ENCODE measurements at regions of chr20 and their contacts with region 1.

Region 1: DNA sequence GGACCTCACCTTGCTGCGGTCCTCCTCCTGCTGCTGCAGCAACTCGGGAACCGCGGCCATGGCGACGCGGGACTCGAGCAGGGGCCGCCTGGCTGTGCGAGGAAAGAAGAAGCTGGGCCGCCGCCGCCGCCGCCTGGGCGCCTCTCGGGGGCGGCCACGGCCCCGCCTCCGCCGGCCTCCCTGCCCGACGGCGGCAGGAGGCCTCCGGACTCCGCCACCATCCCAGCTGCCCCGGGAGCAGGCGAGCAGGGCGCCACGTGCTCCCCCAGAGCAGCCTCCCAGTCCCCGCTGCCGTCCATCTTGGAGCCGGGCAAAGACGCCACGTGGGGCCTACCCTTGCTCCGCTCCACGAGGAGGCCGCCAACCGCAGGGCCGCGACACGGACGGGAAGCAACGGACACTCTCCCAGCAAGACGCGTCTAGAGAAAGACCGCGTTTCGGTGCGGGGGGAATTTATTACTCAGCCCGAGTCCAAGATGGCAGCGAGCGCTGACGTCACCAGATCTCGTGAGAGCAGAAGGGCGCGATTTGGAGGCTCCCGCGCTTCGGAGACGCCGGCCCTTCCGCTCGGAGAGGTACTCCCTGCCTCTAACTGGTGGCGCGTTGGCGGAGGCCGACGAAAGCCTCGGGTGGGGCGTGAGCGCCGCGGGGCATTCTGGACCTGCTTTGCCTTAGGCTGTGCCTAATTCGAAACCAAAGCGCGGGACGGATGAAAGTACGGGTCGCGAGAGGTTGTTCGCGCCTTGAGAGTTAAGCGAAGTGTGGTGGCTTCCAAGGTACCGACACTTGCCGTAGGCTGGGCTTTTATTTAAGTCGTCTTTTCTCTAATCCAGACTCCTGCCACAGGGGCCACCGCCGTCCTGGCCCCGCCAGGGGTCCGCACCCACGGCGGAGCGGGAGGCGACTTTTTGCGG is at the starts of genes MGME1 and SNX5:
- DNase-seq: peak; percentile 97 to 99 (median 98)
- ATAC-seq: peak; percentile 89
- H3K4me3 ChIP-seq: peak within 1 kb of the TSS; percentile 91 to 99
- H3K4me3 Mint-ChIP-seq: peak within 1 kb of the TSS; percentile 97
- H3K27ac ChIP-seq: peak within 1 kb of the TSS; percentile 91 to 99
- H3K27ac Mint-ChIP-seq: peak within 1 kb of the TSS; percentile 98
- H3K4me1 ChIP-seq: peaks cover 63% of the 10 kb centered on the region
- H3K4me1 Mint-ChIP-seq: peaks cover 78% of the 10 kb centered on the region
- H3K27me3 ChIP-seq: no peaks in the 10 kb centered on the region
- H3K27me3 Mint-ChIP-seq: no peaks in the 10 kb centered on the region
- CTCF ChIP-seq: no peak
- total RNA-seq, gene MGME1: 4.5 to 4.7 TPM
- total RNA-seq, gene SNX5: 47.3 to 52.0 TPM

Region 2: DNA sequence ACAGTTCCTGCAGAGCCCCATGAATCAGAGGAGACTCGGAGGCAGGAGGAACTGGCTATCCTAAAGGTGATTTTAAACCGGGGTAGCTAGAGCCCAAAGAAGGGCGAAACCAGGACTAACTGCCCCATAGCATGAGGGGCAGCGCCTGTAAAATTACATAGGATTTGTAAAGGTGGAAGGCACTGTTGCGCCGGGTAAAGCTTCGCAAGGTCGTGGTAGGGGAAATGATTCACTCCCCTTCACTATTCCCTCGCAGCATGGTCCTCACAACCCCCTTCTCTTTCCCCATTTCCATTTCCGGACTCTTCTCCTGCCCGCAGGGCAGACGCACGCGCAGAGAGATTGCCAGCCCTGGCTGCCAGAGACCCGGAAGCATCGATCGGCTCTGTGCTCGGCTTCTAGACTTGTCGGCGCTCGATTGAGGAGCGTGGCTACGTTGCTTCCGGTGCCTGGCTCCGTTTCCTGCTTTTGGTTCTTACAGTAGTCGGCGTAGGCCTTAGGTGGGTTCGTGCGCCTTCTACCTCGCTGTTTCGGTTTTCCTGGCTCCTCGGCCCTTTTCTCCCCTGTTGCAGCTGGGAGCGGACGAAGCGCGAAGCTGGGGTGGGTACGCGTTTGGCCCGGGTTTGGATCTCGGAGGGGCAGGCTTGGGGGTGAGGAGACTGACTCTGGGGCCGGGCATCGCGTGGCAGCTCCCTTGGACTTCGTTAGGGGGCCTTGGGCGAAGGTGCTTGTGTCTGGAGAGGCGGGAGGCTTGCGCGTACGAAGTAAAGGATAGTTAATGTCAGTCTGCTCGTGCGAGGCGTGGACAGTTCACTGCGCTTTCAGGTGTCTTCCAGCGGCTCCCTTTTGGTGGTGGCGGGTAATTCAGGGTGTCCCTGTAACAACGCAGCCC is 1238.8 kb before region 1 on chr20 and contains the start of gene SNRPB2:
- CTCF ChIA-PET with region 1: no interaction called
- POLR2A ChIA-PET with region 1: no interaction called
- intact Hi-C with region 1: loop called in 1 of 2 experiments (anchors 10 kb)
- DNase-seq: peak; percentile 81 to 96 (median 91)
- ATAC-seq: peak; percentile 95
- H3K4me3 ChIP-seq: peak within 1 kb of the TSS; percentile 84 to 97
- H3K4me3 Mint-ChIP-seq: peak within 1 kb of the TSS; percentile 100
- H3K27ac ChIP-seq: peak within 1 kb of the TSS; percentile 93 to 94
- H3K27ac Mint-ChIP-seq: peak within 1 kb of the TSS; percentile 100
- H3K4me1 ChIP-seq: peaks cover 36% of the 10 kb centered on the region
- H3K4me1 Mint-ChIP-seq: peaks cover 52% of the 10 kb centered on the region
- H3K27me3 ChIP-seq: peaks cover 0 to 12% of the 10 kb centered on the region in 2 experiments
- H3K27me3 Mint-ChIP-seq: peaks cover 15% of the 10 kb centered on the region
- CTCF ChIP-seq: no peak
- total RNA-seq, gene SNRPB2: 49.0 to 50.4 TPM

Region 3: DNA sequence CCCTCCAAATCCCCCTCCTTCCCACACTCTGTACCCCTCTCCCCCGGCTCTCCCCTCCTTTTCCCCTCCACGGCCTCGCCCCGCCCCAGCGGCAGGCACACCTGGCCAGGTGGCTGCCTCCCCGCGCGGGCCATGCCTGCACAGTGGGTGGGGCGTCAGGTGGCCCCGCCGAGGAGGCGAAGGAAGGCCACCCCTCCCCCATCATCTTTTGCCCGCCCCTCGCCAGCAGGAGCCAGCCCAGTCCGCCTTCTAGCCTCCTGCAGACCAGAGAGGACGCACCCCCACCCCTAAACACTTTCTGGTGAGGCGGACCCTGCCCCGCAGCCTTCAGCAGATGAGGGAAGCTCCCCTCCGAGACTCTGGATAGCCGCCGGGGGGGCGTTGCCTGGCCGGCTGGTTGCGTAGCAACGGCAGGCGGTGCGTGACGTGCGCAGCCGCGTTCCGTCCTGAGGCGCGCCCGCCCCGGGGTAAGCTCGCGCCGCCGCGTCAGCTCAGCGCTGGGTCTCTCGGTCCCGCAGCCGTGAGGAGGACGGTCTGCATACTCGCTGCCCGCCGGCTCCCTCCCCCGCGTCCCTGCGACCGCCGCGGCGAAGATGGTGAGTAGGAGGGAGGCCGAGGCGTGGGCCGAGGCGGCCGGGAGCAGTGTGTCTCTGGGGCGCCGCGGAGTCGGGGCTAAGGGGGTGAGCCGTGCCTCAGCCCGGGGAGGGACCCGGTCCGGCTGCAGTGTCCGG is 398.8 kb before region 1 on chr20 and contains the start of gene DSTN:
- CTCF ChIA-PET with region 1: no interaction called
- POLR2A ChIA-PET with region 1: interaction called, 3 read pairs
- intact Hi-C with region 1: loop called (anchors 1 to 5 kb)
- DNase-seq: peak; percentile 76 to 94 (median 86)
- ATAC-seq: peak; percentile 88
- H3K4me3 ChIP-seq: peak within 1 kb of the TSS; percentile 80 to 92
- H3K4me3 Mint-ChIP-seq: peak within 1 kb of the TSS; percentile 85
- H3K27ac ChIP-seq: peak within 1 kb of the TSS; percentile 73 to 81
- H3K27ac Mint-ChIP-seq: peak within 1 kb of the TSS; percentile 91
- H3K4me1 ChIP-seq: peaks cover 24% of the 10 kb centered on the region
- H3K4me1 Mint-ChIP-seq: peaks cover 28% of the 10 kb centered on the region
- H3K27me3 ChIP-seq: no peaks in the 10 kb centered on the region
- H3K27me3 Mint-ChIP-seq: no peaks in the 10 kb centered on the region
- CTCF ChIP-seq: no peak
- total RNA-seq, gene DSTN: 40.5 to 42.9 TPM

Region 4: DNA sequence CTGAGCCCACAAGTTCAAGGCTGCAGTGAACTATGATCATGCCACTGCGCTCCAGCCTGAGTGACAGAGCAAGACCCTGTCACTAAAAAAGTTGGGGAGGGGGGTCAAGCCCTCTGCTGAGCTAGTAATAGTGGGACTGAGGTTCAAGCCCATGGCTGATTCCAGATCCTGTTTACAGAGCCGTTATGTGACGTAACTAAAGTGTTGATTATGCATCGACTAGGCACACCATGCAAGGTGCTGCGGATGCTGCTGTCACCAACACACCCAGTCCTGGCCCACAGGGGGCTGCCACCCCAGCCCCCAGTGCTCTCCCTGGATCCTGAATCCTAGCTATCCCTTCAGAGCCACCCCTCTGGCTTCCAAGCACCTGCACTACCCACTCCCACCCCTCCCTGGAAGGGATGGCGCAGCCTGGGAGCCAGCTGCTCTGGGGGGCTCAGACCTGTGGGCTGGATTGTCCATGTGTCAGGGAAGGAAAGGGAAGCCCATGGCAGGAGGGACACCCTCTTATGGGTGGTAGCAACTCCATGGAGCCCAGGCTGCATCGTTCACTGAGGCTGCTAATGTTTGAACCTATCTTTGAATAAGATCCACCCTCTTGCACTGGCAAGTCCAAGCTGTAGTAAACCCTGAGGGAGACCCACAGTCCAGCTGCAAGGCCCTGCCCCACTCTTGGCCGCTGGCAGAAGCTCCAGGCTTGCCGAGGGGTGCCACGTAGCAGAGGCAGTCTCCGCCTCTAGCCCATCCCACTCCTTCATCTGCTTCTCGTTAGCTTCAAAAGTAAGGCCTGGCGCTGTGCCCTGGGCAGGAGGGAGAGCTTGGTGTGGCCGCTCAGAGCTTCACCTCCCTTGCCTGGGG is 95.0 kb before region 1 on chr20:
- CTCF ChIA-PET with region 1: no interaction called
- POLR2A ChIA-PET with region 1: no interaction called
- intact Hi-C with region 1: no loop called
- DNase-seq: no peak
- ATAC-seq: no peak
- H3K4me3 ChIP-seq: no peak overlapping the region
- H3K4me3 Mint-ChIP-seq: no peak overlapping the region
- H3K27ac ChIP-seq: no peak overlapping the region
- H3K27ac Mint-ChIP-seq: no peak overlapping the region
- H3K4me1 ChIP-seq: no peaks in the 10 kb centered on the region
- H3K4me1 Mint-ChIP-seq: peaks cover 15% of the 10 kb centered on the region
- H3K27me3 ChIP-seq: no peaks in the 10 kb centered on the region
- H3K27me3 Mint-ChIP-seq: peaks cover 7% of the 10 kb centered on the region
- CTCF ChIP-seq: no peak

Region 5: GRCh38 chr20:17958373-17959256 is 10.0 kb before region 1 on chr20:
- CTCF ChIA-PET with region 1: interaction called, 11 read pairs
- POLR2A ChIA-PET with region 1: interaction called, 6 read pairs
- intact Hi-C with region 1: no loop called
- DNase-seq: peak in 1 of 9 experiments; percentile 3
- ATAC-seq: no peak
- H3K4me3 ChIP-seq: no peak overlapping the region
- H3K4me3 Mint-ChIP-seq: no peak overlapping the region
- H3K27ac ChIP-seq: peak overlapping the region in 1 of 2 experiments; percentile 34
- H3K27ac Mint-ChIP-seq: peak overlapping the region; percentile 83
- H3K4me1 ChIP-seq: peaks cover 23% of the 10 kb centered on the region
- H3K4me1 Mint-ChIP-seq: peaks cover 69% of the 10 kb centered on the region
- H3K27me3 ChIP-seq: no peaks in the 10 kb centered on the region
- H3K27me3 Mint-ChIP-seq: no peaks in the 10 kb centered on the region
- CTCF ChIP-seq: no peak

Region 6: GRCh38 chr20:18137412-18138265 is 169.0 kb after region 1 on chr20 and contains the starts of genes KAT14 and PET117:
- CTCF ChIA-PET with region 1: no interaction called
- POLR2A ChIA-PET with region 1: no interaction called
- intact Hi-C with region 1: loop called (anchors 1 kb)
- DNase-seq: peak; percentile 84 to 97 (median 90)
- ATAC-seq: peak; percentile 91
- H3K4me3 ChIP-seq: peak within 1 kb of the TSS; percentile 89 to 98
- H3K4me3 Mint-ChIP-seq: peak within 1 kb of the TSS; percentile 88
- H3K27ac ChIP-seq: peak within 1 kb of the TSS; percentile 84 to 91
- H3K27ac Mint-ChIP-seq: peak within 1 kb of the TSS; percentile 91
- H3K4me1 ChIP-seq: peaks cover 19% of the 10 kb centered on the region
- H3K4me1 Mint-ChIP-seq: peaks cover 36% of the 10 kb centered on the region
- H3K27me3 ChIP-seq: no peaks in the 10 kb centered on the region
- H3K27me3 Mint-ChIP-seq: no peaks in the 10 kb centered on the region
- CTCF ChIP-seq: no peak
- total RNA-seq, gene KAT14: 7.8 to 8.4 TPM
- total RNA-seq, gene PET117: 15.3 to 17.3 TPM

Region 7: DNA sequence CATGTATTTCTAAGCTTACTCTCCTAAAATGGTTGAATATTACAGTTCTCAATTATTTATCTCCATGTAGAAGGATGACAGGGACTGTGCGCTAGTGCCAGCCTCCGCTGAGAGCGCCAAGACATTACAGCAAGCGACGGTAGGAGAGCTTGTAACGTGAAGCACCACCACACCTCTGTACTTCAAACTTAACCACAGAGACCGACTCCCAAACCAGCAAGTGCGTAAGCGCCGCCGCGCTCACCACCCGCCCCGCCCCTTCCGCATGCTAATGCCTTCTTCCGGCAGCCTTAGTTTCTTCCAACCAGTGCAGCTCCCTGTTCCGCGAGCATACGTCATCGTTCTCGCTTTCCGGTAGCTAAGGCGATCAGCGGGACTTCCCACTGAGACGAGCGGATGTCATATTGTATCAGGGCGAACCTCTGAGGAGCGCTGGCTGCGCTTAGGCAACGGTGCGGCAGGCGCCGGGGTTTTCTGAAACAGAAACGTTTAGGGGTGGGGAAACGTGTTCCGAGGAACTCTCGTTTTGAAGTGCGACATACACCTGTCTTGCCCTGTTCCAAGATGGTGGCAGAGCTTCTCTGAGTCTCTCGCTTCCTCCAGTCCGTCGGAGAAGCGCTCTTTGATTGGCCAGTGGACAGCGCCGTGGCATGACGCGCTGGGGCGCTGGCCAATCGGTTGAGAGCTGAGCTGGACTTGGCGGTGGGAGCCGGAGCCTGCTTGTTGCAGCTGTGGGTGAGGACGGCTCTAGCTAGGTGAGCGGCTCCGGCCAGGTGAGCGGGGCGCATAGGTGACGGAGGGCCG is 538.8 kb after region 1 on chr20 and contains the start of gene SEC23B:
- CTCF ChIA-PET with region 1: no interaction called
- POLR2A ChIA-PET with region 1: no interaction called
- intact Hi-C with region 1: loop called in 1 of 2 experiments (anchors 2 kb)
- DNase-seq: peak; percentile 96 to 100 (median 98)
- ATAC-seq: peak; percentile 82
- H3K4me3 ChIP-seq: peak within 1 kb of the TSS; percentile 63 to 87
- H3K4me3 Mint-ChIP-seq: peak within 1 kb of the TSS; percentile 100
- H3K27ac ChIP-seq: peak within 1 kb of the TSS; percentile 97 to 100
- H3K27ac Mint-ChIP-seq: peak within 1 kb of the TSS; percentile 100
- H3K4me1 ChIP-seq: peaks cover 17% of the 10 kb centered on the region
- H3K4me1 Mint-ChIP-seq: peaks cover 47% of the 10 kb centered on the region
- H3K27me3 ChIP-seq: no peaks in the 10 kb centered on the region
- H3K27me3 Mint-ChIP-seq: no peaks in the 10 kb centered on the region
- CTCF ChIP-seq: no peak
- total RNA-seq, gene SEC23B: 31.5 to 31.8 TPM

Region 8: DNA sequence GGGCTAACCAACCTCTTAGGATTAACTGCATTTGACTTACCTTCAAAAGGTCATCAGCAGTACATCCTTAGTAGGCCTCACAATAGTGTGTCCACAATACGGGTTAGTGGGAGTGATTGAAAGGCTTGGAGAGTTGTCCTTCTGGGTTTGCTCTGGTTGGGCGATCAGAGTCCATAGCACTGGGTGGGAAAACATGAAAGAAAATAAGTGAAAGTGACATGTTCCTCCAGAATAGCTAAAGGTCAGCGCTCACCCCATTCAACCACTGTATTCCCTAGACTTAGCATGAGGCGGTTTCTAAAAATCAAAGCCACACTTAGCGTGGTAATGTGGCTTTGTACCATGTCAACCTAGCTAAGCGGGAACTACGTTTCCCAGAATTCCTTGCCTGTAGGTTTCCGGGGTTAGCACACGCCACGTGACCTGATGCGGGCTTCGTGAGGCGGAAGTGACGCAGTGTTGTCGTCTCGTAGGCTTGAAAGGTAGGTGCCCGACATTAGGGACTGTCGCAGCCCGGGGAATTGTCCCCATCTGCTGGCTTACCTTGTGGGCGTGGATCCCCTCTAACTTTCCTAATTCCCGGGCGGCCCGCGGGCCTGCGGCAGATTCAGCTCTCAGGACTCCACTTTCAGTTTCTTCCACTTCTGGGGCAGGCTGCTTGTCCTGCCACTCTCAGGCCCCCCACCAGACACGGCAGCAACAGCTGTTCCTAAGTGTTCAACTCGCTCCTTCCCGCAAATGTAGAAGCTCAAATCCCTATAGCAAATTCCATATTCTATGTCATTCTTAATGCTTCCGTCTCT is 825.2 kb after region 1 on chr20:
- CTCF ChIA-PET with region 1: no interaction called
- POLR2A ChIA-PET with region 1: no interaction called
- intact Hi-C with region 1: loop called (anchors 5 to 10 kb)
- DNase-seq: peak; percentile 78 to 98 (median 88)
- ATAC-seq: peak; percentile 93
- H3K4me3 ChIP-seq: peak overlapping the region; percentile 73 to 79
- H3K4me3 Mint-ChIP-seq: peak overlapping the region; percentile 96
- H3K27ac ChIP-seq: peak overlapping the region; percentile 94 to 95
- H3K27ac Mint-ChIP-seq: peak overlapping the region; percentile 100
- H3K4me1 ChIP-seq: peaks cover 12% of the 10 kb centered on the region
- H3K4me1 Mint-ChIP-seq: peaks cover 17% of the 10 kb centered on the region
- H3K27me3 ChIP-seq: no peaks in the 10 kb centered on the region
- H3K27me3 Mint-ChIP-seq: peaks cover 19% of the 10 kb centered on the region
- CTCF ChIP-seq: no peak